ENCODE measurements at regions of chr1 and their contacts with region 1.

Region 1: GRCh38 chr1:26787706-26788514 is at the start of gene PIGV:
- DNase-seq: peak; percentile 89
- ATAC-seq: peak; percentile 60
- H3K4me3 Mint-ChIP-seq: peak within 1 kb of the TSS; percentile 97
- H3K27ac Mint-ChIP-seq: peak within 1 kb of the TSS; percentile 98
- H3K4me1 Mint-ChIP-seq: peaks cover 52% of the 10 kb centered on the region
- H3K27me3 Mint-ChIP-seq: no peaks in the 10 kb centered on the region; the same call in 1 of the 2 replicates
- CTCF ChIP-seq: no peak
- total RNA-seq, gene PIGV: 13.1 to 15.0 TPM (median 13.7 TPM) in 3 replicates

Region 2: DNA sequence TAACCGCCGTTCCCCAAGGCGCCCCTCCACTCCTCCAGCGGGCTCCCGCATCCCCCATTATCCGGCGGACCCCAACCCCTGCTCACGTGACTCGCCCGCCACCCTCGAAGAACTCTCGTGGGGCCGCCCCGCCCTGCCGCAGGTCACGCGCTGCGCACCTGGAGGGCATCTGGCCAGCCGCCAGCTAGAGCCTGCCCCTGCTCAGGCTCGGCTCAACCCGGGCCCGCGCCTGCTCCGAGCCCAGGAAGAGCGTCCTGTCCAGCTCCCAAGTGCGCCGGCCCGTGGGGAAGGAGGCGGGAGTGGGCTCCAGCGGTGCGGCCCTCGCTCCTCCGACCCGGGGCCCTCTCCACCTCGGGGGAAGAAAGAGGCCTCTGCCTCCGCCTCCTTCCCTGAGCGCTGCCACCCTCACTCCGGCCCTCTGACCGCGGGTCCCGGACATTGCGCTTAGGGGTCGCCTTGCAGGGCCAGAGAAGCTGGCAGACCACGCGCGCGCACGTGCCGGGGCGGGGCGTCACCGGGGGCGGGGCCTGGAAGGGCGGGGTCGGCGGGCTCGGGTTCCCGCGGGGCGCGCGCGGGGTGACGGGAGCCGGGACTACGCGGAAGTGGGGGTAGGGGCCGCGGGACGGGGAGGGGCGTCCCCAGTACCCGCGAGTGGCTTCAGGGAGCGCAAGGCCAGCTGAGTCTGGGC is 287.3 kb before region 1 on chr1:
- CTCF ChIA-PET with region 1: interaction called, 16 read pairs
- POLR2A ChIA-PET with region 1: no interaction called
- DNase-seq: peak; percentile 89
- ATAC-seq: peak; percentile 63
- H3K4me3 Mint-ChIP-seq: peak overlapping the region; percentile 81
- H3K27ac Mint-ChIP-seq: peak overlapping the region; percentile 76; the same call in 1 of the 2 replicates
- H3K4me1 Mint-ChIP-seq: no peaks in the 10 kb centered on the region
- H3K27me3 Mint-ChIP-seq: no peaks in the 10 kb centered on the region; the same call in 1 of the 2 replicates
- CTCF ChIP-seq: no peak

Region 3: GRCh38 chr1:26582836-26583460 is 205.0 kb before region 1 on chr1:
- CTCF ChIA-PET with region 1: interaction called, 32 read pairs
- POLR2A ChIA-PET with region 1: no interaction called
- DNase-seq: no peak
- ATAC-seq: no peak
- H3K4me3 Mint-ChIP-seq: no peak overlapping the region
- H3K27ac Mint-ChIP-seq: no peak overlapping the region
- H3K4me1 Mint-ChIP-seq: no peaks in the 10 kb centered on the region
- H3K27me3 Mint-ChIP-seq: no peaks in the 10 kb centered on the region
- CTCF ChIP-seq: no peak

Region 4: DNA sequence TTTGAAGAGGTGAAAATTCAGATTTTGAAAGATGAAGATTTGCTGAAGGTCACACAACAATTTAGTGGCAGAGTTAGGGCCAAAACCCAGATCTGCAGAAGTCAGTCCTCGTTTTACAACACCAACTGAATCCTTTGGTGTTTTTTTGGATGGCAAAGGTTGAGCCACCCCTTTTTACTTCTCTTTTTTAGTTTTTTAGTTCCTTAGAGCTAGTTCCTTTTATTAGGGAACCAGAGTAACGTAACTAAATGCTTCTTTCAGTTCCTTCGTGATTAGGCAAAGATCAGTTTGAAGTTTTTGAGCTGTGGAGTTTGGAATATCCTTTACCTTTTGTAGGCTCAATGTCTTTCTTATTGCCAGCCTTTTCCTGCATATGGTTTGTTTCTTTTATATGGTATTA is 160.0 kb before region 1 on chr1:
- CTCF ChIA-PET with region 1: no interaction called
- POLR2A ChIA-PET with region 1: no interaction called
- DNase-seq: no peak
- ATAC-seq: no peak
- H3K4me3 Mint-ChIP-seq: no peak overlapping the region
- H3K27ac Mint-ChIP-seq: no peak overlapping the region
- H3K4me1 Mint-ChIP-seq: peaks cover 3% of the 10 kb centered on the region; the same call in 1 of the 2 replicates
- H3K27me3 Mint-ChIP-seq: peaks cover 3% of the 10 kb centered on the region
- CTCF ChIP-seq: no peak

Region 5: GRCh38 chr1:26677306-26678115 is 110.4 kb before region 1 on chr1:
- CTCF ChIA-PET with region 1: interaction called, 36 read pairs
- POLR2A ChIA-PET with region 1: no interaction called
- DNase-seq: peak; percentile 57
- ATAC-seq: peak; percentile 100
- H3K4me3 Mint-ChIP-seq: no peak overlapping the region
- H3K27ac Mint-ChIP-seq: peak overlapping the region; percentile 9; the same call in 1 of the 2 replicates
- H3K4me1 Mint-ChIP-seq: peaks cover 8% of the 10 kb centered on the region
- H3K27me3 Mint-ChIP-seq: no peaks in the 10 kb centered on the region
- CTCF ChIP-seq: no peak

Region 6: DNA sequence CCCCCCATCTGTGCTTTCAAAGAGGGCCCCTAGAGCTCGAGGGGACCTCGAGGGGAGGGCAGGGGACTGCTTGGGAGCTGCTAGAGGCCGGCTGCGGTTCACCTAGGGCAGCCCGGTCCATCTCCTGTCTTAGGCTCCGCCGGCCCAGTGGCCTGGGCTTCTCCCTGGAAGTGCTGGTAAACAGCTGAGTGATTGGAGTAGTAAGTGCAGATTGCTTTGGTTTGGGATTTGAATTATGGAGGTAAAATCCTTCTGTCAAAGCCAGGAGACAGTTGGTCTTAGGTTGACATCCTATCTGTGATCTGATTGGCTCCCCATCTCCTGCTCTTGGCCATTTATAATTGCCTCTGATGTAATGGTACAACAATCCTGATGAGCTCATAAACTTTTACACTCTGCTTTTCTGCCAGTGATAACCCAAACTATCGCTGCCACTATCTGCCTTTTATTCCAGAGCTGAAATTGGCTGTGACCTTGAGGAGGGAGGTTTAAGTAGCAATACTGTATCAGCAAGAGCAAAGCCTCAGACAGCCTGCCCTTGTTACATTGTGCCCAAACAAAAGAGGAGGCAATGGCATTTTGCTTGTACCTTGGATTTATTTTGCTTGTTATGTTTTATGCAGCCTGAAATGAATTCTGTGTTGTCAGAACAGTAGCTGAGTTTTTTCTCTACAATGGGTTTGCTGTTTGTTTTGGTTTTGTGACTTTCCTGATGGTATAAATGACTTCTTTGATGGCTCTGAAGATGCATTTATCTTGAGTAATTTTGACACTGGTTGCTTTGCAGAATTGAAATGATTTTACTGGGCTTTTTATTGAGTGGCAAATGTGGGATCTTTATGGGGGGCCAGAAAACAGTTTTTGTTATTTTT is 89.7 kb before region 1 on chr1:
- CTCF ChIA-PET with region 1: interaction called, 33 read pairs
- POLR2A ChIA-PET with region 1: interaction called, 19 read pairs
- DNase-seq: peak; percentile 22
- ATAC-seq: no peak; the same call in none of the 2 replicates
- H3K4me3 Mint-ChIP-seq: no peak overlapping the region
- H3K27ac Mint-ChIP-seq: no peak overlapping the region
- H3K4me1 Mint-ChIP-seq: peaks cover 17% of the 10 kb centered on the region
- H3K27me3 Mint-ChIP-seq: no peaks in the 10 kb centered on the region
- CTCF ChIP-seq: no peak

Region 7: DNA sequence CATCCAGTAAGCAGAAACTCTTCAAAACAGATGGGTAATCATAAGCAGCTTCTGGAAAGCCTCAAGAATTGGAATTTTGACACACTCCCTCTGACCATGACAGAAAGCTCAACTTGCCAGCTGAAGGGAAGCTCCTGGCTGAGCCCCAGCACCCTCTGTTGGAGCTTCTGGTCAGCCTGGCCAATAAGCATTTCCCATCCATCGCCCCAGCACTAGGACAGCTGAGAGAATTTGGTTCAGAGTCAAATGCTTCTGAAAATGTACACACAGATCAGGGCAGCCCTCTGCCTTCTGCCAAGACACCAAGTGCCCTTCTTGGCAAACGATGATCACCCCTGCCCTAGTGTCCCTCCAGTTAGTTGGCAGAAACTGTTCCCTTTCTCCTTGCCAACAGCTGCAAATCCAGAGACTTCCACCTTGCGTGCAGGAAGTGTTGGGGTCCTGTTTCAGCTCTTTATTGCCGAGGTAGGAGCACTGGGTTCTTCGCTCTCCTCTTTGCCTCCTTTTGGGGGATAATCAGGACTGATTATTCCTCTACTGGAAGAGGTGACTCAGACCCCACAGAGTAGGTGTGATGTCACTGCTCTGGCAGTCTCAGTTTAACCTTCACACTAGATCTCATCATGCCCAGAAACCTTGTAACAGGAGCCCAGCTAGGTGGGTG is 11.7 kb after region 1 on chr1:
- CTCF ChIA-PET with region 1: interaction called, 35 read pairs
- POLR2A ChIA-PET with region 1: interaction called, 3 read pairs
- DNase-seq: no peak
- ATAC-seq: peak; percentile 54
- H3K4me3 Mint-ChIP-seq: no peak overlapping the region
- H3K27ac Mint-ChIP-seq: peak overlapping the region; percentile 79
- H3K4me1 Mint-ChIP-seq: peaks cover 19% of the 10 kb centered on the region
- H3K27me3 Mint-ChIP-seq: 0 out of 2 replicates have a peak, but pooled peaks cover 3% of the 10 kb centered on the region
- CTCF ChIP-seq: no peak